Activated CD4-positive, alpha-beta T cell treated with anti-CD3 and anti-CD28 coated beads, Interleukin-2, amount 10 ng/mL, durations not matched to agents 24 days and 14 days (primary cell): ENCODE measurements at regions of chr15 and their contacts with region 1.

Region 1: GRCh38 chr15:80776420-80777045 is 2.6 kb upstream of the CEMIP start:
- DNase-seq: peak; percentile 89
- H3K4me3 Mint-ChIP-seq: no peak overlapping the region
- H3K27ac Mint-ChIP-seq: no peak overlapping the region
- H3K4me1 Mint-ChIP-seq: peaks cover 7% of the 10 kb centered on the region
- H3K27me3 Mint-ChIP-seq: peaks cover 44% of the 10 kb centered on the region

Region 2: DNA sequence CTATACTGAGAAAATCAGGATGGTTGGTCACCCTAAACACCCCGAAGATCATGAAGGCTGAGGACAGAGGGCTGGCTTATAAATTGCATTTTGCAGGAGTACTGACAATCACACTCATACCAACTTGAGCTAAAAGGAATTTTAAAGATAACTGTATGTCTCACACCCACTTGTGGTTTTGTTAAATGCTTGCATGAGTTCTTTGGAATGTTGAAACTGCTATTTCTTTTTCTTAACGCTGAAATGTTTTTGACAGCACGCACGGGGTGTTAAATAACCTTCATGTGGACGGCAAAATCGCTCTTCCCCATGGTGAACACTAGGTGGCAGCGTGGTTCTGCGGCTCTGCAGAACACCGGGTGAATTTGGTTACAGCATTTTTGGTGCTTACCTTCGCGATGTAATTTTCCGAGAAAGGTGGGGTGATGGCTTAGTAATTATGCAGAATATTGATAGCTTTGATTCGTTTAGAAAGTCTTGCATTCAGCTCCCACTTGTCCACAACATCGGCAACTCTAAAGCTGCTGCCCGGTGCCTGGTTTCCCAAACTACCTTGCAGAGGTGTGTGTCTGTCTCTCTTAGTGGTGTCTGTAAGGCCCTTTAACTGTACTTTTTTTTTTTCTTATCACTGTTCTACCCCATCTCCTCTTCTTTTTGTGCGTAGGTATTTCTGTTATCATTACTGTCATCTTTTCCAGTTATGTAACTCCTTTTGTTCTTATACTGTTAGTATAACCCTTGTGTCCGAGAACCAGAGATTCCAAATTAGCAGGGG is 320.7 kb before region 1 on chr15:
- intact Hi-C with region 1: loop called (anchors 1 kb)
- DNase-seq: peak; percentile 85
- H3K4me3 Mint-ChIP-seq: no peak overlapping the region
- H3K27ac Mint-ChIP-seq: no peak overlapping the region
- H3K4me1 Mint-ChIP-seq: peaks cover 4% of the 10 kb centered on the region
- H3K27me3 Mint-ChIP-seq: peaks cover 15% of the 10 kb centered on the region

Region 3: DNA sequence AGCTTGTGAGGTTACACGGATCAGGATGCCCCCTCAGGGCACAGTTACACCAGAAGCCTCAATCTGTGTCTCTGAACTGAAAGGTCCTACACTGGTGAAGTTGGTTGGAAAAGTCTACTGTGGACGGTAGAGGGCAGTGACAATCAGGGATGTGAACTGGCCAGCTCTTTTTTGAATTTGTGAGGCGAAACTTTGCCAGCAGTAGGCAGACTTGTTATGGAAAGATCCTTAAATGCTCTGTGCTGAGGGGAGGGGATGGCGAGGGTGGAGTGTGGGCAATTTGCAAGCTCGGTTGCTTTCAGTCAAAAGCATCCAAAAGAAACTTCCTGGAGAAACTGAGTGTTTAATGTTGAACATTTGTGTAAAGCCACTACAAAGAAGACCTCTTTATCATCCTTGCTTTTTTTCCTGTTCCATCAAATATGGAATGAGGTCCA is 208.8 kb before region 1 on chr15:
- intact Hi-C with region 1: loop called (anchors 5 kb)
- DNase-seq: peak; percentile 66
- H3K4me3 Mint-ChIP-seq: no peak overlapping the region
- H3K27ac Mint-ChIP-seq: no peak overlapping the region
- H3K4me1 Mint-ChIP-seq: no peaks in the 10 kb centered on the region
- H3K27me3 Mint-ChIP-seq: peaks cover 10% of the 10 kb centered on the region

Region 4: DNA sequence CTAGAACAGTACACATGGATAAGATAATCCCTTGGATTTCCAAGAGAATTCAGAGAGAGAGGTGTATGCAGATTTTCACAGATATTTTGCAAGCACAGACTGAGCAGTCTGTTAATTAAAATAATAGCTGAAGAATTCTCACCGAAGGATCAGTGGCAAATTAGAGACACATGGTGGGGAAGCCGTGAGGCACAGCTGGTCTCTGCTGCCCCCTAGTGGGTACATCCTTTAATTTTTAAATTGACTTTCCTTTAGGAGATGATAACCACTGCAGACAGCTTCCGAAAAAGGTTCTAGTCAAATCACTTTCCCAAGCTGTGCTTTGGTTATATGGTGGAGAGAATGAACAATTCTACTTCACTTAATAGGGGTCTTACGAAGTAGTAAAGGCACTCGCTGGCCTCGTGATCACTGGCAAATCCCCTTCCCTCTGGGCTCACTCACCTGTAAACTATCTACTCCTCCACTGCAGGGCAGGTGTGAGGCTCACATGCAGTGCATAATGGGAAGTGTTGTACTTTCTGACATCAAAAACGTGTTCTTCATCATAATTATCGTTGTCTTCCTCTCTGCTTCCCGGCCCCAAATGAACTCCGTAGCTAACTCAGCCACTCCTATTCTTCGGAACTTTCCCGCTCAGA is 193.6 kb after region 1 on chr15:
- intact Hi-C with region 1: loop called (anchors 2 kb)
- DNase-seq: peak; percentile 88
- H3K4me3 Mint-ChIP-seq: no peak overlapping the region
- H3K27ac Mint-ChIP-seq: no peak overlapping the region
- H3K4me1 Mint-ChIP-seq: peaks cover 6% of the 10 kb centered on the region
- H3K27me3 Mint-ChIP-seq: no peaks in the 10 kb centered on the region

Region 5: GRCh38 chr15:81038975-81039607 is 262.6 kb after region 1 on chr15:
- intact Hi-C with region 1: no loop called
- DNase-seq: peak; percentile 60
- H3K4me3 Mint-ChIP-seq: peak overlapping the region; percentile 6
- H3K27ac Mint-ChIP-seq: peak overlapping the region; percentile 57
- H3K4me1 Mint-ChIP-seq: peaks cover 10% of the 10 kb centered on the region
- H3K27me3 Mint-ChIP-seq: no peaks in the 10 kb centered on the region